Activated CD8-positive, alpha-beta memory T cell treated with anti-CD3 and anti-CD28 coated beads, Interleukin-2, amount 10 ng/mL, durations not matched to agents 7 days and 5 days (primary cell): ENCODE measurements at regions of chr11 and their contacts with region 1.

Region 1: DNA sequence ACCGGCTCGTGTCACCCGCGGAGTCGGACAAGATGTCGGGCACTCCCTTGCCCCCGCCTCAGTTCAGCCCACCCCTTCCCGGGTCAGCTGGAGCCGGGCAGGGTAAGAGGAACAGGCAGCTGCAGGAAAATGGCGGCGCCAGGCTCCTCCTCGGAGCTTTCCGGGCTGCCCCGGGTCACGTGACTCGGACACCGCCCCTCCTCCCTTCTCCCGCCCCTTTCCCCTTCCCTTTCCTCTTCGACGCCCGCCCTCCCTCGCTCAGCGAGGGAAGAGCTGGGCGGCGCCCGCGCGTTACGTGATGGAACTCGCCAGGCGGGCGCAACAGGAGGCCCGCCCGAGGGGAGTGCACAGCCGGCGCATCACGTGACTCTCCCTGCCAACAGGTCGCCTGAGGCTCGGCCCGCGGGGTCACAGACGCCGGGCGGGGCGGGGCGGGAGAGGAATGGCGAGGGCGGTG is at the start of gene PICALM:
- DNase-seq: peak; percentile 99
- ATAC-seq: peak; percentile 89
- H3K4me3 Mint-ChIP-seq: peak within 1 kb of the TSS; percentile 100
- H3K27ac Mint-ChIP-seq: peak within 1 kb of the TSS; percentile 92
- H3K4me1 Mint-ChIP-seq: peaks cover 25% of the 10 kb centered on the region
- H3K27me3 Mint-ChIP-seq: no peaks in the 10 kb centered on the region
- total RNA-seq, gene PICALM: 123 to 166 TPM

Region 2: DNA sequence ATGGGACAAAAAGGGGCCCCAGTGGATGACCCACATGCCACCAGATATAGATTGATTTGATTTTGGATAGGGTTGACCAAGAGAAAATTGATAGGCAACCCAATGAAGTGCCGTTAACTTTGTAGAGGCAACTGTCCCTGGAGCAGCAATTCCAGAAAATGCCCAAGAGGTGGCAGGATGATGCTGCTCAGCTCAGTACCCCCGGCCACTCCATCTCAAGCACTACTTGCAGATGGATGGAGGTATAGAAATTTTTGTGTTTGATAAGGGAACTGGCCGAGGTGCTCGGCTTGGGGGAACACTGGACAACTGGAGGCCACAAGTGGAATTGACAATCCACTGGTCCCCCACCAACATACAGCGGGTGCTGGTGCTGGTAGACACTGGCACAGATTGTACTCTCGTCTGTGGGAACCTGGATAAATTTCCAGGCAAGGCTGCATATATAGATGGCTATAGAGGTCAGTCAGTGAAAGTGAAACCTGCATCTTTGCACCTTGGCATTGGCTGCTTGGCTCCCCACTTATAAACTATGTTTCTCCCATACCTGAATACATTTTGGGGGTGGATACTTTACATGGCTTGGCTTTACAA is 127.5 kb before region 1 on chr11:
- CTCF ChIA-PET with region 1: no interaction called
- DNase-seq: peak; percentile 55
- ATAC-seq: peak; percentile 40
- H3K4me3 Mint-ChIP-seq: no peak overlapping the region
- H3K27ac Mint-ChIP-seq: no peak overlapping the region
- H3K4me1 Mint-ChIP-seq: peaks cover 28% of the 10 kb centered on the region
- H3K27me3 Mint-ChIP-seq: no peaks in the 10 kb centered on the region

Region 3: GRCh38 chr11:86047275-86047991 is 21.5 kb before region 1 on chr11:
- CTCF ChIA-PET with region 1: interaction called, 18 read pairs
- DNase-seq: peak; percentile 79
- ATAC-seq: peak; percentile 79
- H3K4me3 Mint-ChIP-seq: peak overlapping the region; percentile 15
- H3K27ac Mint-ChIP-seq: peak overlapping the region; percentile 79
- H3K4me1 Mint-ChIP-seq: peaks cover 85% of the 10 kb centered on the region
- H3K27me3 Mint-ChIP-seq: no peaks in the 10 kb centered on the region

Region 4: DNA sequence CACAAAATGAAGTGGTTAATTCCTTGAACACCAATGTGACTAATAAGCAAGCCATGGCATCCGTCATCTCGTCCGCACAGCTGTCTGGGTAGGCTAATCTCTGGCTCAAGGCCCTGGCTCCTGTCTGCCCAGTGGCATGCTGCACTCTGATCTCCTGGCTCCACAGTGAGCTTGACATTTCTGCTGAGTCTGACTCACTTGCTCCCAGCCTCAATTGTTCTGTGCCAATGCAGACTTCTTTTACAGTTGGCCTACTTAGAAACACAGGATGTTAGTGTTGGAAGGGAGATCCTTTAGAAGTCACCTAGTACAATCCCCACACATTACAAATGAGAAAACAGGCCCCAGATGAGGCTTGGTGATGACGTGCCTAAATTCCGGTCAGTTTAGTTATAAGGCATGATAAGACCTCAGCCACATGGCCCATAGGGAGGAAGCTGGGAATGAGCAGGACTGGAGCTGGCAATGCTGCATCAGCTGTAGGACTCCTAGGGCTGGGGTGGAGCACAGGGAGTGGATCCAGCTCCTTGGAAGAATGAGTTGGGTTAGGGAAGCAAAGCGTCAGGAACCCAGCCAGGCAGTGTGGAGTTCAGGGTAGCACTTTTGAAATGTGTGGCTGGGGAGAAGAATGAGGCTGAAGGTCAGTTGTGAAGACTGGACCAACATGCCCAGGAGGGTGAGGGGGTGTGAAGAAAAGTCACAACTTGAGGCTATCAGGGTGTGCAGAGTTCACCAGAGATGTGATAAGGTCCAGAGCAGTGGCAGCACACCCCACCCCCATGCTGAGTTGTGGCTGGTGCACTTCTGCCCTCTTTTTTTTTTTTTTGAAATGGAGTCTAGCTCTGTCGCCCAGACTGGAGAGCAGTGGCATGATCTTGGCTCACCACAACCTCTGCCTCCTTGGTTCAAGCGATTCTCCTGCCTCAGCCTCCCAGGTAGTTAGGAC is 105.4 kb after region 1 on chr11:
- CTCF ChIA-PET with region 1: interaction called, 13 read pairs
- DNase-seq: no peak
- ATAC-seq: no peak
- H3K4me3 Mint-ChIP-seq: no peak overlapping the region
- H3K27ac Mint-ChIP-seq: no peak overlapping the region
- H3K4me1 Mint-ChIP-seq: peaks cover 30% of the 10 kb centered on the region
- H3K27me3 Mint-ChIP-seq: no peaks in the 10 kb centered on the region

Region 5: GRCh38 chr11:86202013-86202336 is 133.0 kb after region 1 on chr11:
- CTCF ChIA-PET with region 1: interaction called, 13 read pairs
- DNase-seq: peak; percentile 57
- ATAC-seq: peak; percentile 81
- H3K4me3 Mint-ChIP-seq: no peak overlapping the region
- H3K27ac Mint-ChIP-seq: no peak overlapping the region
- H3K4me1 Mint-ChIP-seq: peaks cover under 1% of the 10 kb centered on the region
- H3K27me3 Mint-ChIP-seq: no peaks in the 10 kb centered on the region